ENCODE measurements at regions of chr10 and their contacts with region 1.

Region 1: GRCh38 chr10:92024700-92025099 is 101.1 kb downstream of the BTAF1 start:
- DNase-seq: no peak
- ATAC-seq: no peak
- H3K4me3 ChIP-seq: no peak overlapping the region
- H3K4me3 Mint-ChIP-seq: no peak overlapping the region
- H3K27ac ChIP-seq: no peak overlapping the region
- H3K27ac Mint-ChIP-seq: no peak overlapping the region
- H3K4me1 ChIP-seq: no peaks in the 10 kb centered on the region
- H3K4me1 Mint-ChIP-seq: no peaks in the 10 kb centered on the region
- H3K27me3 ChIP-seq: no peaks in the 10 kb centered on the region
- H3K27me3 Mint-ChIP-seq: no peaks in the 10 kb centered on the region

Region 2: DNA sequence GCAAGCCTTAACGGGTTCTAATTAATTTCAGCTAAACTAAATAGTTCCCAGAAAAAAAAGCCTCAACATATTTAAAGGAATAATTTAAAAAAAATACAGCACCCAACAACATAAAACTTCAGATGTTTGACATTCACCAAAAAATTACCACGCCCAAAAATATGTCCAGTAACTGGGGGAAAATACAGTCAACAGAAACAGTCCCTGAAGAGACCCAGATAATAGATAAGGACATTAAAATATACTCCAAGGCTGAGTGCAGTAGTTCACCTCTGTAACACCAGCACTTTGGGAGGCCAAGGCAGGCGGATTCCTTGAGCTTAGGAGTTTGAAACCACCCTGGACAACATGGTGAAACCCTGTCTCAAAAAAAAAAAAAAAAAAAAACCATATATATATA is 23.1 kb before region 1 on chr10:
- CTCF ChIA-PET with region 1: no interaction called
- POLR2A ChIA-PET with region 1: interaction called in 1 of 2 experiments, 10 read pairs
- DNase-seq: no peak
- ATAC-seq: no peak
- H3K4me3 ChIP-seq: no peak overlapping the region
- H3K4me3 Mint-ChIP-seq: no peak overlapping the region
- H3K27ac ChIP-seq: no peak overlapping the region
- H3K27ac Mint-ChIP-seq: peak overlapping the region in 1 of 2 donors; percentile 4
- H3K4me1 ChIP-seq: no peaks in the 10 kb centered on the region
- H3K4me1 Mint-ChIP-seq: peaks cover 0 to 1% (median 0%) of the 10 kb centered on the region in 3 donors
- H3K27me3 ChIP-seq: no peaks in the 10 kb centered on the region
- H3K27me3 Mint-ChIP-seq: no peaks in the 10 kb centered on the region